Heart left ventricle (tissue), 16 donors: ENCODE measurements at regions of chr15 and their contacts with region 1.

Region 1: DNA sequence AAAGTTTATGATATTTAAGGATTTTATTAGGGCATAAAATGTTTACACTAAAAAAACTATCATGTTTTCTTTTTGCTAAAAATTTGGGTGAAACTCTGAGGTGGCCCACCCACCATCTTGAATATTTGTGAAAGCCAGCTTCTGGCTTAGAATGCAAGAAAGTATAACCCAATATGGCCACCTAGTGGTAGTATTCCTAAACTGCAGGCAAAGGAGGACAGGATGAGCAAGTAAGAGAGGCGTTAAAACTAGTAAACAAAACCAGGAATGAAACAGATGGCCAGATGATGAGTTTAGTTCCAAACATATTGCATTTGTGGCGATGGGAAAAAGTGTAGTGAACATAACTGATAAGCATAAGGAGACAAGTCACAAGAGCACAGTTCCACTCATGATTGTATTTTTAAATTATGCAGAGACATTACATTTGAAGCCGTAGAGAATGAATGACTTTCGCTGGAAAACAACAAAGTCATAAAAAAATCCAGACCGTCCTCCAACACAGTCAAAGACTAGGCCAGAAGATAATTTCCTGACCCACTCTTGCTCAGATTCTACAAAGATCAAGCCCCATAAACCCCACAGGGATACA is 103.3 kb upstream of the PRTG start:
- DNase-seq: peak in 2 of 5 donors; percentile 41 to 52
- ATAC-seq: peak in 3 of 4 donors; percentile 56 to 68 (median 57)
- H3K4me3 ChIP-seq: no peak overlapping the region
- H3K27ac ChIP-seq: no peak overlapping the region
- H3K4me1 ChIP-seq: no peaks in the 10 kb centered on the region
- H3K27me3 ChIP-seq: no peaks in the 10 kb centered on the region
- CTCF ChIP-seq: peak; percentile 72 to 92 (median 90)
- POLR2A ChIP-seq: no peak

Region 2: GRCh38 chr15:55613727-55614126 is 232.5 kb before region 1 on chr15:
- intact Hi-C with region 1: no loop called
- DNase-seq: no peak
- ATAC-seq: no peak
- H3K4me3 ChIP-seq: no peak overlapping the region
- H3K27ac ChIP-seq: no peak overlapping the region
- H3K4me1 ChIP-seq: no peaks in the 10 kb centered on the region
- H3K27me3 ChIP-seq: no peaks in the 10 kb centered on the region
- CTCF ChIP-seq: no peak
- POLR2A ChIP-seq: no peak

Region 3: GRCh38 chr15:55654561-55655031 is 191.6 kb before region 1 on chr15:
- intact Hi-C with region 1: loop called in 9 of 10 experiments (anchors 2 to 5 kb)
- DNase-seq: no peak
- ATAC-seq: no peak
- H3K4me3 ChIP-seq: no peak overlapping the region
- H3K27ac ChIP-seq: no peak overlapping the region
- H3K4me1 ChIP-seq: no peaks in the 10 kb centered on the region
- H3K27me3 ChIP-seq: no peaks in the 10 kb centered on the region
- CTCF ChIP-seq: no peak
- POLR2A ChIP-seq: no peak

Region 4: GRCh38 chr15:55789066-55789660 is 57.0 kb before region 1 on chr15:
- intact Hi-C with region 1: loop called in 2 of 10 experiments (anchors 2 to 10 kb)
- DNase-seq: peak in 1 of 5 donors; percentile 26
- ATAC-seq: no peak
- H3K4me3 ChIP-seq: no peak overlapping the region
- H3K27ac ChIP-seq: no peak overlapping the region
- H3K4me1 ChIP-seq: no peaks in the 10 kb centered on the region
- H3K27me3 ChIP-seq: no peaks in the 10 kb centered on the region
- CTCF ChIP-seq: peak; percentile 26 to 58 (median 51)
- POLR2A ChIP-seq: no peak

Region 5: GRCh38 chr15:55799291-55800212 is 46.7 kb before region 1 on chr15:
- intact Hi-C with region 1: loop called in 1 of 10 experiments (anchors 10 kb)
- DNase-seq: no peak
- ATAC-seq: no peak
- H3K4me3 ChIP-seq: no peak overlapping the region
- H3K27ac ChIP-seq: no peak overlapping the region
- H3K4me1 ChIP-seq: no peaks in the 10 kb centered on the region
- H3K27me3 ChIP-seq: no peaks in the 10 kb centered on the region
- CTCF ChIP-seq: peak in 11 of 12 donors; percentile 24 to 57 (median 45)
- POLR2A ChIP-seq: no peak

Region 6: DNA sequence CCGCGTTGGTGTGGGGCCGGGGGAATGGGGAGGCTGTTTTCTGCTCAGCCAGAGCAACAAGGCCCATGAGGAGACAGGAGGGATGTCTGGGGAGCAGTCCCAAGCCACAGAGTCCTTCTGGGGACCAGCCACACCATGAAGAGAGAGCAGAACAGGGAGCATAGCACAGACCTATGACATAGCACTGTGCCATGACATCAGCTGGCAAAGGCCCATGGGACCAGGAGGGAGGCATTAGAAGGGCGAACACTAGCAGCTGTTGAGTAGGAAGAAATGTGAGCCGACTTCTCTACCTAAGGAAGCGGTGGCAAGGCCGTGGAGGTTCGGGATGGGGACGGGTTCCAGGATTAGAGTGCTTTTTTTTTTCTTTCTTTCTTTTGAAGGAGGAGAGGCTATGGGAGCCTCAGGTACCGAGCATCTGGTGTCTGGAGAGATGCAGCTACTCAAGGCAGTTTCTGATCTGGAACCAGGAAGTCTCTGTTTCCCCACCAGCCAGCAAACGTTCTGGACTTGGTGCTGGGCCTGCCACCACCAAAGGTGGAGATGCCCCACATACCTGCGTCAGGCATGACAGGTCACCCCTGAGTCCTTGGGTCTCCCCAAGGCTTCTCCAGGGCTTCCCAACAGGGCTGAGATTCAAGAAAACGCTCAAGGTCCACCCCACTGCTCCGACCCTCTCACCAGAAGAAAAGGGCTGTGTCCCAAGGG is 1452.8 kb after region 1 on chr15:
- intact Hi-C with region 1: no loop called
- DNase-seq: no peak
- ATAC-seq: no peak
- H3K4me3 ChIP-seq: no peak overlapping the region
- H3K27ac ChIP-seq: no peak overlapping the region
- H3K4me1 ChIP-seq: no peaks in the 10 kb centered on the region
- H3K27me3 ChIP-seq: no peaks in the 10 kb centered on the region
- CTCF ChIP-seq: no peak
- POLR2A ChIP-seq: no peak